GM13977 (cell line): ENCODE measurements at regions of chr1 and their contacts with region 1.

Region 1: DNA sequence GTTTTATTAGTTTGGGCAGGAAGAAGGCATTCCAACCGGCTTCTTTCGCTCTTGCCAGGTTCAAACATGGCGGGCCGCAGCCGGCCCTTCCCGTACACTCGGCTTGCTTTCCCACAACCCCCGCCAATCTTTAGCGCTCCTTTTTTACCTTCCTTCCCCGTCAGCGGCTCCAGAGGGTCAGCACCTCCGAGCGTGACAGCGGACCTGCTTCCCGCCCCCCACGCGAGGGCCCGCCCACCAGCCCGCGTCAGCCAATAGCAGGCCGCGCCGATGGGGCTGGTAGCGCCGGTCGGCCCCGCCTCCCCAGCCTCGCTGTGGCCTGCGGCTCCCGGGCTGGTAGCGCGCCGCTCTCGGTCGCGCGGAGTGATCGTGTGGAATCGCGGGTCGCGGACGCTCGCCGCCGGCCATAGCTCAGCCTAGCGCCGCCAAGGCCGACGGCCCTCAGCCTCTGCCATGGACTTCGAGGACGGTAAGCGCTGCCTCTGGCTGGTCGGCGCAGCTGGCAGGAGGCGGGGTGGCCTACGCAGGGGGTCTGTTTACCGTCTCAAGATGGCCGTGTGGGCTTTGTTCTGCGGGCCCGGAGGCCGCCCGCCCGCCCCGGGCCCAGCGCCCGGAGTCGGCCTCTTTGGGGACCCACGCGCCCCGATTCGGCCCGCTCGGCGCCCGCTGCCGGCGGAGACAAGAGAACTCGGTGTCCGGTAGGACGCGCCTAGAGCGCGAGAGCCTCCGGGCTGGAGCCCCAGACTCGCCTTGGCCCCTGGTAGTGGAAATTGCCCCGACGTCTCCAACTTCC is at the start of gene ZNF326:
- DNase-seq: peak; percentile 99
- CTCF ChIP-seq: no peak

Region 2: DNA sequence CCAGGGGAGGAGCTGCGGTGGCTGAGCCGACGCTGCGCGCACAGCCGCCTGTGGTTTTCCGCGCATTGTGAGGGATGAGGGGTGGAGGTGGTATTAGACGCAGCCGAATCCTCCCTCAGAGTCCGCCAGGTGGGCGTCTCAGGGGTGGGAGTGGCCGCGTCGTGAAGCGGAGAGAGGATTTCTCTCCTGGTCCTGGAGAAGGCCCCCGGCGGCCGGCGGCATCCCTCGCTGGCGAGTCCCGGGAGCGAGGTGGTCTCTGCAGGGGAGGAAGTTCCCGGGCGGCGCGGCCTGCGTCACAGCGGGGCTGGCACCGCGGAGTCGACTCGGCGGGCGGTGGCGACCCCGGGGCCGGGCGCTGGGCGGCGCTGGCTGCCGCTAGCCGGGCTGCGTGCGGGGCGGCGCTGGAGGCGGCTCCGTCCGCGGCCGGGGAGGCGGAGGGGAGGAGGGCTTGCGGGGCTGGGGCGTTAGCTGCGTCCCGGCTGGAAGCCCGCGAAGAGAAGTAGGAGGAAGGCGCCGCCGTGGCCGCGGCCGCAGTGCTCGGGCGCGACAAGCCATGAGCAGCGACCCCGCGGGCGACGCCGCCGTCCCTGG is 362.2 kb before region 1 on chr1 and contains the start of gene LRRC8C:
- in situ Hi-C with region 1: loop called (anchors 25 kb)
- DNase-seq: peak; percentile 89
- CTCF ChIP-seq: peak; percentile 88

Region 3: DNA sequence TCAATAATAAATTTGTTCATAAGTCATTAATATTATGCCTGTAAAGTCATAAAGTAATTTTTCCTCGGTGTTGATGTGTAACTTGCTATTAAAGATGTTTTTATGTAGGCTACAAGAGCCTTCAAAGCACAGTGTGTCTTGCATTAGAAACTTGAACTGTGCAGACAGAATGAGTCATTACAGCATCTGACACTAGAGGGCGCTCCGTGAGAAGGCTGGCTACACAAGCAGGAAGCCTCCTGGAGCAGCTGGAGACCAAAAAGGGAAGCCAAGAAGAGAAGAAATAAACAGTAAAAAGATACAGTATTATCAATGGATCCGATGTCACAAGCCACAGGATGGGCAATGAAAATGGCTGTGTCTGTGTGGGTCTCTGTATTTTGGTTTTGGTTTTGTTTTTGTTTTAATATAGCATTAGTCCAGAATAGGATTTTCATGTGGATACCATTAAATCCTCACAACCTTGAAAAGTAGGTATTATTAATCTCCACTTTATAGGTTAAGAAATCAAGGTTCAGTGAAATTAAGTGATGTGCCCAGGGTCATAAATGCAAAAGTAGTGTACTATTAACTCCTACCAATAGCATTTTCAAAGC is 190.3 kb before region 1 on chr1:
- in situ Hi-C with region 1: loop called (anchors 5 kb)
- DNase-seq: peak; percentile 75
- CTCF ChIP-seq: peak; percentile 89